PC-3 (cell line): ENCODE measurements at regions of chr14 and their contacts with region 1.

Region 1: DNA sequence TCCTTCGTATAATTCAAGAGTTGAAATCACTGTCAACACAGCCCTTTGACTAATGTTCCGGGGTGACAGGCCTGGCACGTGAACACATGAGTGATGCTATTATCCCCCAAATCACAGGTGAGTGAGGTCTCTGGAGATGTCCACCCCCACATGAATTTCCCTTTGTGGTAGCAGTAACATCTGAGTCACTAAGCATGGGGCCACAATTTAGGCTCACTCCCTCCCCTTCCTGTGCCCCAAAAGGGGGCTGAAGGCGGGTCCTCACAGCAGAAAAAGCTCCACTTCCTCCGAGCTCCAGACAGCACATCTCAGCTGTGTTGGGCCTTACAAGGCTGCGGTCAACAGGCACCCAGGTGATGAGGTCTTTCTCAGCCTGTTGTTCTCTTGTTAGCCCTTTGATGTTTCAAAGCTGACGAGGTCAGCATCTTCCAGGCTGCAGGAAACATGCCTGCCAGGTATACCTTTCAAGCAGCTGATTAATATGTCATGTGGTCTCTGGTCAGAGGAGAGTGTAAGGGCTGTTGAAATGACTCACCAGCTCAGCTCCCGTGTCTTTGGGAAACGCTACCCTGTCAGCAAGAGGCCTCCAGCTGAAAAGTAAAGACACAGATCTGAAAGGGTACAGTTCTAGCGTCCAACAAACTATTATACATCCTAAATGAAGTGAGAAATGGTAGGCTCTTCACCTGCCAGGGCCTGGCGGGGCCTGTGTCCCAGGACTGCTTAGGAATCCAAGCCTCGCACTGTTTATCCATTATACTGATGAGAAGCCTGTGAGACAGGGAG is 107.3 kb downstream of the ZFP36L1 start:
- DNase-seq: peak; percentile 95
- ATAC-seq: peak; percentile 67
- H3K4me3 ChIP-seq: no peak overlapping the region
- H3K27ac ChIP-seq: peak overlapping the region; percentile 96
- H3K4me1 ChIP-seq: peaks cover 75% of the 10 kb centered on the region
- H3K27me3 ChIP-seq: no peaks in the 10 kb centered on the region
- CTCF ChIP-seq: no peak

Region 2: GRCh38 chr14:68047906-68048305 is 637.7 kb before region 1 on chr14:
- CTCF ChIA-PET with region 1: no interaction called
- POLR2A ChIA-PET with region 1: no interaction called
- intact Hi-C with region 1: no loop called
- DNase-seq: peak; percentile 82
- ATAC-seq: peak; percentile 100
- H3K4me3 ChIP-seq: peak overlapping the region; percentile 33
- H3K27ac ChIP-seq: peak overlapping the region; percentile 21
- H3K4me1 ChIP-seq: peaks cover 9% of the 10 kb centered on the region
- H3K27me3 ChIP-seq: no peaks in the 10 kb centered on the region
- CTCF ChIP-seq: no peak

Region 3: DNA sequence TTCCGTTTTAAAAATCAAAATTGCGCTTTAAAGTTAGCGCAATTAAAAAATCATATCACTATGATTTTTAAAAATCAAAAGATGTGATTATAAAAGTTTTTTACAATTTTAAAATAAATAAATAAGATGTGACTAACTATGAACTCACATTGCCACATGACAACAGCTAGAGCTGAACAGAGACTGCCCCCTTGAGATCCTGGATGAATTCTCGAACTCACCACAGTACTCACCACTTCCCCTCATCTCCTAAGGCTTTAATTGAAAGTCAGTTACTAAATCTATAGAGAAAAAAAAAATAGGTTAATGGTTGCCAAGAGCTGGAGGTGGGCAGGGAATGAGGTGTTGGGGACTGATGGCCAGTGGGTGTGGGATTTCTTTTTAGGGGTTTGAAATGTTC is 276.9 kb before region 1 on chr14:
- CTCF ChIA-PET with region 1: no interaction called
- POLR2A ChIA-PET with region 1: no interaction called
- intact Hi-C with region 1: loop called (anchors 2 kb)
- DNase-seq: peak; percentile 63
- ATAC-seq: peak; percentile 59
- H3K4me3 ChIP-seq: no peak overlapping the region
- H3K27ac ChIP-seq: peak overlapping the region; percentile 22; the same call in 1 of the 2 replicates
- H3K4me1 ChIP-seq: peaks cover 56% of the 10 kb centered on the region
- H3K27me3 ChIP-seq: no peaks in the 10 kb centered on the region
- CTCF ChIP-seq: peak; percentile 63

Region 4: DNA sequence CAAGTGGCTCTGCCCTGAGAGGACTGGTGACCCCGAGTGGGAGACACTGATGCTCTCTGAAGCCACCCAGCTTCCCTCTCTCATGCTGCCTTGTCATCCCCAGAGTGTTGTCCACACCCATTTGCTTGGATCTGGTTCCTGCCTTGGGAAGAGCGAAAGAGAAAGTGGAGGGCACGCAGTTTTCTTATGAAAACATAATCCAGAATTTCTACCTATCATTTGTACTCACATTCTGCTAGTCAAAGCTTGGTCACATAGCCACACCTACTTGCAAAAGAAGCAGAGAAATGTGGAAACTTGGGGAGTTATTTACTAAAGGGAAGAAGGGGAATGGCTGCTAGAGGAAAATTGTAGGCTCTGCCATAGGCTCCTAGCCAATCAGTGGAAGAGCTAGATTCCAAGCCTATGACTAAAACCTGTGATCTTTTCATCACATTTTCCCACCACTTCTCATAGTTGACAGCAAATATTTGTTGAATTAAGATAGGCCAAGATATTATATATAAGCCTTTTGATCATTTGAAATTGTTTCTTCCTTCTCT is 219.1 kb before region 1 on chr14:
- CTCF ChIA-PET with region 1: no interaction called
- POLR2A ChIA-PET with region 1: interaction called, 3 read pairs
- intact Hi-C with region 1: loop called (anchors 2 kb)
- DNase-seq: peak; percentile 96
- ATAC-seq: peak; percentile 34
- H3K4me3 ChIP-seq: no peak overlapping the region; the same call in 1 of the 2 replicates
- H3K27ac ChIP-seq: peak overlapping the region; percentile 55
- H3K4me1 ChIP-seq: peaks cover 59% of the 10 kb centered on the region
- H3K27me3 ChIP-seq: no peaks in the 10 kb centered on the region
- CTCF ChIP-seq: no peak

Region 5: DNA sequence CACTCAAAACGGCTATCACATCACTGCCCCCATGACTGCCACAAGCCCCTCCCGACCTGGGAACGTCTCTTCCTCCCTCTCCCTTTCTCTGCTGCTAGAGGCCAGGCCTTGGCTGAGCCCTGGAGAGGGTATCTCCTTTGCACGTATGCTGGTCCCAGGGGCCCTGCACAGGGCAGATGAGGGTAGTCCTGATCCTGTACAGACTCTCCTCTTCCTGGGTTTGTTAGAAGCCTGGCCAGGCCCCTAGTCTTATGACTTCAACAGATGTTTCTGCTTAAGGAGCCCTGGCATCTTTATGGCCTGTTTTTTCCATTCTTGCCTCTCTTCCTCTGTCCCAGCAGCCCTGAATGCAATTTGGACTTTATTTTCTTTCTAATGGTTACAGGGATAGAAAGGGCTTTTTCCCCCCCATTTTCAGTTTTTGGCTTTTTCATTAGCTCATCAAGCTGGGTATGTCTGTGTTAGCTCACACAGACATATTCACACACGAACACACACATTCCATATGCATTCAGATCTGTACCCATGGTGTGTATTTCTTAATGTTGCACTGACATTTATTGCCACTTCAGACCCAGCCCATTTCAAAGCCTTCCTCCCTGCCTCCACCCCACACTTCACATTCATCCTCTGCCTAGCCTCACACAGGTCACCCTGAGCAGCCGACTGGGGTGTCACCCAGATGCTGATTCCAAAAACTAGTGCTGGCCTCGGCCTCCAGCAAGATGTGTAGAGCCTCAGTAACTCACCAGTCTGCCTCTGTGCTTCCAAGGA is 96.0 kb before region 1 on chr14:
- CTCF ChIA-PET with region 1: no interaction called
- POLR2A ChIA-PET with region 1: no interaction called
- intact Hi-C with region 1: no loop called
- DNase-seq: no peak
- ATAC-seq: no peak
- H3K4me3 ChIP-seq: no peak overlapping the region
- H3K27ac ChIP-seq: no peak overlapping the region
- H3K4me1 ChIP-seq: peaks cover 5% of the 10 kb centered on the region
- H3K27me3 ChIP-seq: no peaks in the 10 kb centered on the region
- CTCF ChIP-seq: no peak

Region 6: GRCh38 chr14:68637106-68638021 is 48.2 kb before region 1 on chr14:
- CTCF ChIA-PET with region 1: no interaction called
- POLR2A ChIA-PET with region 1: interaction called, 11 read pairs
- intact Hi-C with region 1: no loop called
- DNase-seq: no peak
- ATAC-seq: no peak
- H3K4me3 ChIP-seq: no peak overlapping the region
- H3K27ac ChIP-seq: no peak overlapping the region
- H3K4me1 ChIP-seq: no peaks in the 10 kb centered on the region
- H3K27me3 ChIP-seq: no peaks in the 10 kb centered on the region
- CTCF ChIP-seq: no peak

Region 7: GRCh38 chr14:68651652-68652367 is 33.8 kb before region 1 on chr14:
- CTCF ChIA-PET with region 1: no interaction called
- POLR2A ChIA-PET with region 1: no interaction called
- intact Hi-C with region 1: no loop called
- DNase-seq: no peak
- ATAC-seq: no peak
- H3K4me3 ChIP-seq: no peak overlapping the region
- H3K27ac ChIP-seq: no peak overlapping the region
- H3K4me1 ChIP-seq: no peaks in the 10 kb centered on the region
- H3K27me3 ChIP-seq: no peaks in the 10 kb centered on the region
- CTCF ChIP-seq: no peak

Region 8: DNA sequence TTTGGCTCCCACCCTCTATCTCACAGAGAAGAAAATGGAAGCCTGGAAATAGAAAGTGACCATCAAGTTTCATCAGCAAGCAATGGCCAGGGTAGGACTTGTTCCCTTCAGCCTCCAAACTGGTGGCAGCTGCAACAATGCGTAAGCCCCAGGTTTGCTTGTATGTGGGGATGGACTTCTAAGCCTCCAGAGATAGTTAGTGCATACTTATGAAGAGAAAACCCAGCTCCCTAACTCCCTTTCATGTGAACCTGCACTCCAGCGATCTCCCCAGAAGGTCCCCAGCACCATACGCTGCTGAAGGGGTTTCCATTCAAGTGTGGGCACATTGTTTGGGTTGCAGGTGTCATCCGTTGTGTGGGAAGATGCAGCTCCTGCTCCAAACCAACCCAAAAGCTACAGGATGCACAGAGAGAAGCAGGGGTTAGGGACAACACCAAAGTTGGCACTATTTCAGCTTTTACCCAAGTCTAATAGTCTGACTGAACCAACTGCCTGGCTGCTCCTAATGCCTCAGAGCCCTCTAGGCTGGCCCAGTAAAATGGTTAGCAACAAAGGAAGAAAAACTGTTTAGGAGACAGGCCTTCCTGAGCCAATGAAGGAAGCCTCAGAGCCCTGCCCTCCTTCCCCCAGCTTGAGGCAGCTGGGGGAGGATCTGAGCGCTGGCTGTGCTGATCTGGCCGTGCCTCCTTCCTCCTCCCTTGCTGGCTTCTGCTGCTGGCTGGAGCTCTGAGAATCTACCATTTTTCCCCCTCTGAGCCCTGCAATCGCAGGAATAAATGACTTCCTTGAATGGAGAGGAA is 94.9 kb after region 1 on chr14:
- CTCF ChIA-PET with region 1: no interaction called
- POLR2A ChIA-PET with region 1: no interaction called
- intact Hi-C with region 1: loop called (anchors 1 kb)
- DNase-seq: peak; percentile 43
- ATAC-seq: peak; percentile 20
- H3K4me3 ChIP-seq: peak overlapping the region; percentile 32
- H3K27ac ChIP-seq: peak overlapping the region; percentile 80
- H3K4me1 ChIP-seq: peaks cover 60% of the 10 kb centered on the region
- H3K27me3 ChIP-seq: no peaks in the 10 kb centered on the region
- CTCF ChIP-seq: no peak

Region 9: GRCh38 chr14:68926236-68926635 is 240.6 kb after region 1 on chr14:
- CTCF ChIA-PET with region 1: no interaction called
- POLR2A ChIA-PET with region 1: no interaction called
- intact Hi-C with region 1: no loop called
- DNase-seq: peak; percentile 36
- ATAC-seq: peak; percentile 4; the same call in 1 of the 2 replicates
- H3K4me3 ChIP-seq: no peak overlapping the region
- H3K27ac ChIP-seq: no peak overlapping the region
- H3K4me1 ChIP-seq: no peaks in the 10 kb centered on the region
- H3K27me3 ChIP-seq: no peaks in the 10 kb centered on the region
- CTCF ChIP-seq: peak; percentile 72